HEK293 (cell line): ENCODE measurements at regions of chrX and their contacts with region 1.

Region 1: GRCh38 chrX:120560842-120561633 is at the start of gene CUL4B:
- H3K4me3 ChIP-seq: peak within 1 kb of the TSS; percentile 71
- H3K27ac ChIP-seq: peak within 1 kb of the TSS; percentile 97
- H3K4me1 ChIP-seq: no peaks in the 10 kb centered on the region
- CTCF ChIP-seq: no peak

Region 2: GRCh38 chrX:120549483-120550452 is 11.3 kb before region 1 on chrX:
- CTCF ChIA-PET with region 1: interaction called, 4 read pairs
- POLR2A ChIA-PET with region 1: interaction called, 19 read pairs
- H3K4me3 ChIP-seq: no peak overlapping the region
- H3K27ac ChIP-seq: peak overlapping the region; percentile 12; the same call in 1 of the 2 replicates
- H3K4me1 ChIP-seq: 0 out of 2 replicates have a peak, but pooled peaks cover 5% of the 10 kb centered on the region
- CTCF ChIP-seq: no peak

Region 3: GRCh38 chrX:120603707-120604360 is 42.8 kb after region 1 on chrX and contains the start of gene MCTS1:
- CTCF ChIA-PET with region 1: no interaction called
- POLR2A ChIA-PET with region 1: interaction called, 37 read pairs
- H3K4me3 ChIP-seq: peak within 1 kb of the TSS; percentile 54
- H3K27ac ChIP-seq: peak within 1 kb of the TSS; percentile 62
- H3K4me1 ChIP-seq: no peaks in the 10 kb centered on the region; the same call in 1 of the 2 replicates
- CTCF ChIP-seq: no peak

Region 4: GRCh38 chrX:121114691-121115090 is 553.7 kb after region 1 on chrX:
- CTCF ChIA-PET with region 1: no interaction called
- POLR2A ChIA-PET with region 1: no interaction called
- H3K4me3 ChIP-seq: no peak overlapping the region
- H3K27ac ChIP-seq: no peak overlapping the region
- H3K4me1 ChIP-seq: no peaks in the 10 kb centered on the region
- CTCF ChIP-seq: no peak